ENCODE measurements at regions of chr7 and their contacts with region 1.

Region 1: DNA sequence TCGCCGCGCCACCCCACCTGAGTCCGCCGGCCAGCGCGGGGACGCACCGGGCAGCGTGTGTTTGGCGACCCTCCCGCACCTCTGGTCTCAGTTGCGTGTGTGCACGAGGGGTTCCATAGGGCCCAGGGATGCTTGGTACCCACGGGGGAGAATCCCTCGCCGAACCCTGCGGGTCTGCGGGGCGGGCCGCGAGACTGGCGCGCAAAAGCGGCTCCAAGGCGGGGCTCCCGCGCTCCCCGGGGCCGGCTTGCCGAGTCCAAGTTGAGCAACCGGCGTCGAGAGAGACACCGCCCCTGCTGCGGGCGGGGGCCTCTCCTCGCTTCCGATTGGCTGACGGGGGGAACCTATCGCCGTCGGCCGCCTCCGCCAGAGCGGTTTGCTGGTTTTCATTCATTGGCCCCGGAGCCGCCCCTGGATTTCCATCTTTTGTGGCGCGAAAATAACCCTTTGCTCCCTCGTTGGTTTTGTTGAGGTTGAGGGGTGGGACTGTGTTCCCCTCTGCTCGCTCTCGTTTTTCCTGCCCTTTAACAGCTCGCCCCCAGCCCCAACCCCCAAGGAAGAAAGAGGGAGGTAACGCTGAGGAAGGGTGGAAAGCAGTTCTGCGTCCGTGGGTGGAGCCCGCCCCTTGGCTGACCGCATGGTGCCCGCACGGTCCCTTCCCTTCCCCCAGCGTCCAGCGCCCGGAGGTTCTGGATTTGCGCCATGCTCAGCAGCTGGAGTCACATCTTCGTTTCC is 4.0 kb upstream of the IGF2BP3 start:
- DNase-seq: peak; percentile 76
- ATAC-seq: peak; percentile 76
- H3K4me3 ChIP-seq: peak overlapping the region; percentile 89
- H3K27ac ChIP-seq: peak overlapping the region; percentile 94
- H3K4me1 ChIP-seq: no peaks in the 10 kb centered on the region
- H3K27me3 ChIP-seq: peaks cover 0 to 4% of the 10 kb centered on the region in 2 experiments; a peak in 1 of 4 replicates
- CTCF ChIP-seq: no peak
- EP300 ChIP-seq: no peak
- POLR2A ChIP-seq: peak; percentile 93
- RAD21 ChIP-seq: no peak

Region 2: GRCh38 chr7:22992874-22993840 is 481.1 kb before region 1 on chr7:
- CTCF ChIA-PET with region 1: no interaction called
- POLR2A ChIA-PET with region 1: no interaction called
- RAD21 ChIA-PET with region 1: no interaction called
- SMC1A ChIA-PET with region 1: no interaction called
- in situ Hi-C with region 1: no loop called
- intact Hi-C with region 1: no loop called
- DNase-seq: peak; percentile 65
- ATAC-seq: peak; percentile 85
- H3K4me3 ChIP-seq: peak overlapping the region; percentile 50
- H3K27ac ChIP-seq: peak overlapping the region; percentile 68
- H3K4me1 ChIP-seq: peaks cover 29% of the 10 kb centered on the region
- H3K27me3 ChIP-seq: no peaks in the 10 kb centered on the region
- CTCF ChIP-seq: no peak
- EP300 ChIP-seq: peak in 1 of 2 experiments; percentile 19; a peak in 1 of 4 replicates
- POLR2A ChIP-seq: no peak
- RAD21 ChIP-seq: no peak

Region 3: GRCh38 chr7:23373151-23374004 is 100.9 kb before region 1 on chr7:
- CTCF ChIA-PET with region 1: no interaction called
- POLR2A ChIA-PET with region 1: no interaction called
- RAD21 ChIA-PET with region 1: no interaction called
- SMC1A ChIA-PET with region 1: interaction called, 4 read pairs
- in situ Hi-C with region 1: no loop called
- intact Hi-C with region 1: loop called (anchors 5 kb)
- DNase-seq: peak; percentile 76
- ATAC-seq: peak; percentile 74
- H3K4me3 ChIP-seq: peak overlapping the region; percentile 41; the same call in 1 of the 2 replicates
- H3K27ac ChIP-seq: peak overlapping the region; percentile 52
- H3K4me1 ChIP-seq: peaks cover 40% of the 10 kb centered on the region
- H3K27me3 ChIP-seq: no peaks in the 10 kb centered on the region
- CTCF ChIP-seq: no peak
- EP300 ChIP-seq: peak; percentile 51 to 95; a peak in 3 of 4 replicates
- POLR2A ChIP-seq: no peak
- RAD21 ChIP-seq: no peak

Region 4: GRCh38 chr7:23462846-23463245 is 11.4 kb before region 1 on chr7:
- CTCF ChIA-PET with region 1: interaction called, 13 read pairs
- POLR2A ChIA-PET with region 1: interaction called, 6 read pairs
- RAD21 ChIA-PET with region 1: interaction called, 17 read pairs
- SMC1A ChIA-PET with region 1: interaction called, 9 read pairs
- in situ Hi-C with region 1: no loop called
- intact Hi-C with region 1: no loop called
- DNase-seq: no peak
- ATAC-seq: peak; percentile 20
- H3K4me3 ChIP-seq: peak overlapping the region; percentile 39
- H3K27ac ChIP-seq: peak overlapping the region; percentile 57
- H3K4me1 ChIP-seq: peaks cover 10% of the 10 kb centered on the region
- H3K27me3 ChIP-seq: no peaks in the 10 kb centered on the region
- CTCF ChIP-seq: peak in 1 of 3 experiments; percentile 62; a peak in 3 of 6 replicates
- EP300 ChIP-seq: no peak
- POLR2A ChIP-seq: no peak
- RAD21 ChIP-seq: peak; percentile 66

Region 5: GRCh38 chr7:23531794-23532489 is 57.7 kb after region 1 on chr7 and contains the start of gene TRA2A:
- CTCF ChIA-PET with region 1: interaction called, 6 read pairs
- POLR2A ChIA-PET with region 1: interaction called, 18 read pairs
- RAD21 ChIA-PET with region 1: interaction called, 10 read pairs
- SMC1A ChIA-PET with region 1: interaction called, 10 read pairs
- in situ Hi-C with region 1: no loop called
- intact Hi-C with region 1: loop called (anchors 1 kb)
- DNase-seq: peak; percentile 86
- ATAC-seq: peak; percentile 84
- H3K4me3 ChIP-seq: peak within 1 kb of the TSS; percentile 99
- H3K27ac ChIP-seq: peak within 1 kb of the TSS; percentile 99
- H3K4me1 ChIP-seq: 0 out of 2 replicates have a peak, but pooled peaks cover 2% of the 10 kb centered on the region
- H3K27me3 ChIP-seq: no peaks in the 10 kb centered on the region
- CTCF ChIP-seq: no peak
- EP300 ChIP-seq: 0 out of 4 replicates have a peak, but pooled peaks of 1 of the 2 experiments have one; percentile 22
- POLR2A ChIP-seq: peak; percentile 98
- RAD21 ChIP-seq: no peak
- polyA plus RNA-seq, gene TRA2A: 69.2 to 83.1 TPM

Region 6: DNA sequence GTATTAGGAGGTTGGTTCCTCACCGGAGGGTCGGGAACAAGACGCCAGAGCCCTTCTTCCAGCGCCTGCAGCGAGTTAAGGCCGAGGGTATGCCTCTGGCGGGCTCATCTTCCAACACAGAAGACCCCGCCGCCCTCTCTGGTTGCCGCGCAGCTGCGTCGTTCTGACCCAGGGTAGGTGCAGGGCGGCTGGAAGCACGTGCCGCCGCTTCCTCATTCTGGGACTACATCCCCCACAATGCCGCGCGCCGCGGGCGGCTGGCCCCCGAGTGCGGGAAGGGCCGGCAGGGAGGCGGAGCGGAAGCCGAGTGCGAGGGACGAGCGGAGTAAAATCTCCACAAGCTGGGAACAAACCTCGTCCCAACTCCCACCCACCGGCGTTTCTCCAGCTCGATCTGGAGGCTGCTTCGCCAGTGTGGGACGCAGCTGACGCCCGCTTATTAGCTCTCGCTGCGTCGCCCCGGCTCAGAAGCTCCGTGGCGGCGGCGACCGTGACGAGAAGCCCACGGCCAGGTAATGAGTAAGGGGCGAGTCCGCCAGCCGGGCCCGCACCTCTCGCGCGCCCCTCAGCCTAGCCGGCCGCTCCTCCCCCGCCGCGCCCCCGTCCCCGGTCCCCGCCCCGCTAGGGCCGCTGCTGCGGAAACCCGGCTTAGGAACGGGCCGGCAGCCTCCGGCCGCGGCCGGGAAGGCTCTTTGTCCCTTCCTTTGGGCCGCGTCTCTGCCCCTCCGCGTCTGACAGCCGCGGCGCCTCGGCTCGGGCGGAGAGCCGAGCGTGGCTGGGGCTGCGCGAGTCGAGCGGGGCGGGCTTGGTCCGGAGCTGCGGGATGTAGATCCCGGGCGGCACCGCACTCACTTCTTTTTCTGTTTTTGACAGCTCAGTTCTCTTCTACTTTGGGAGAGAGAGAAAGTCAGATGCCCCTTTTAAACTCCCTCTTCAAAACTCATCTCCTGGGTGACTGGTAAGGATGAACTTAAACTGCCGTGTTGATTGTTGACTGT is 123.1 kb after region 1 on chr7 and contains the start of gene CCDC126:
- CTCF ChIA-PET with region 1: no interaction called
- POLR2A ChIA-PET with region 1: interaction called, 5 read pairs
- RAD21 ChIA-PET with region 1: no interaction called
- SMC1A ChIA-PET with region 1: interaction called, 11 read pairs
- in situ Hi-C with region 1: no loop called
- intact Hi-C with region 1: loop called (anchors 5 kb)
- DNase-seq: peak; percentile 57
- ATAC-seq: peak; percentile 77
- H3K4me3 ChIP-seq: peak within 1 kb of the TSS; percentile 76
- H3K27ac ChIP-seq: peak within 1 kb of the TSS; percentile 92
- H3K4me1 ChIP-seq: peaks cover 32% of the 10 kb centered on the region
- H3K27me3 ChIP-seq: no peaks in the 10 kb centered on the region
- CTCF ChIP-seq: no peak
- EP300 ChIP-seq: no peak
- POLR2A ChIP-seq: peak; percentile 74
- RAD21 ChIP-seq: no peak
- polyA plus RNA-seq, gene CCDC126: 34.3 to 49.9 TPM